ENCODE measurements at regions of chr2 and their contacts with region 1.

Region 1: GRCh38 chr2:9613291-9613690 is 17.5 kb downstream of the YWHAQ start:
- DNase-seq: no peak
- H3K4me3 ChIP-seq: no peak overlapping the region
- H3K27ac ChIP-seq: no peak overlapping the region
- H3K4me1 ChIP-seq: peaks cover 8% of the 10 kb centered on the region
- H3K27me3 ChIP-seq: no peaks in the 10 kb centered on the region
- CTCF ChIP-seq: no peak
- POLR2A ChIP-seq: no peak

Region 2: GRCh38 chr2:9596621-9597311 is 16.5 kb before region 1 on chr2:
- CTCF ChIA-PET with region 1: interaction called, 10 read pairs
- POLR2A ChIA-PET with region 1: no interaction called
- dilution Hi-C with region 1: no loop called
- intact Hi-C with region 1: no loop called
- DNase-seq: no peak
- H3K4me3 ChIP-seq: no peak overlapping the region
- H3K27ac ChIP-seq: no peak overlapping the region
- H3K4me1 ChIP-seq: no peaks in the 10 kb centered on the region
- H3K27me3 ChIP-seq: no peaks in the 10 kb centered on the region
- CTCF ChIP-seq: no peak
- POLR2A ChIP-seq: no peak

Measured in endothelial cell of umbilical vein (primary cell).